Spleen (tissue), 13 donors: ENCODE measurements at regions of chr5 and their contacts with region 1.

Region 1: GRCh38 chr5:103232393-103232999 is 26.1 kb upstream of the MACIR start:
- DNase-seq: no peak
- H3K4me3 ChIP-seq: no peak overlapping the region
- H3K27ac ChIP-seq: no peak overlapping the region
- H3K4me1 ChIP-seq: no peaks in the 10 kb centered on the region
- H3K27me3 ChIP-seq: no peaks in the 10 kb centered on the region
- CTCF ChIP-seq: peak; percentile 26 to 75 (median 68)
- POLR2A ChIP-seq: no peak

Region 2: GRCh38 chr5:103475629-103476240 is 243.2 kb after region 1 on chr5:
- intact Hi-C with region 1: loop called (anchors 2 kb)
- DNase-seq: no peak
- H3K4me3 ChIP-seq: no peak overlapping the region
- H3K27ac ChIP-seq: peak overlapping the region in 1 of 8 donors; percentile 82
- H3K4me1 ChIP-seq: peaks cover 0 to 17% (median 0%) of the 10 kb centered on the region in 6 donors
- H3K27me3 ChIP-seq: no peaks in the 10 kb centered on the region
- CTCF ChIP-seq: peak; percentile 19 to 65 (median 60)
- POLR2A ChIP-seq: no peak